ENCODE measurements at regions of chr17 and their contacts with region 1.

Region 1: GRCh38 chr17:42819944-42820535 is 4.0 kb downstream of the BECN1 start:
- DNase-seq: no peak
- H3K4me3 ChIP-seq: no peak overlapping the region
- H3K27ac ChIP-seq: no peak overlapping the region
- H3K4me1 ChIP-seq: peaks cover 21 to 36% (median 32%) of the 10 kb centered on the region in 4 donors
- H3K27me3 ChIP-seq: no peaks in the 10 kb centered on the region
- CTCF ChIP-seq: peak; percentile 39 to 73 (median 42)
- EP300 ChIP-seq: no peak
- POLR2A ChIP-seq: no peak

Region 2: DNA sequence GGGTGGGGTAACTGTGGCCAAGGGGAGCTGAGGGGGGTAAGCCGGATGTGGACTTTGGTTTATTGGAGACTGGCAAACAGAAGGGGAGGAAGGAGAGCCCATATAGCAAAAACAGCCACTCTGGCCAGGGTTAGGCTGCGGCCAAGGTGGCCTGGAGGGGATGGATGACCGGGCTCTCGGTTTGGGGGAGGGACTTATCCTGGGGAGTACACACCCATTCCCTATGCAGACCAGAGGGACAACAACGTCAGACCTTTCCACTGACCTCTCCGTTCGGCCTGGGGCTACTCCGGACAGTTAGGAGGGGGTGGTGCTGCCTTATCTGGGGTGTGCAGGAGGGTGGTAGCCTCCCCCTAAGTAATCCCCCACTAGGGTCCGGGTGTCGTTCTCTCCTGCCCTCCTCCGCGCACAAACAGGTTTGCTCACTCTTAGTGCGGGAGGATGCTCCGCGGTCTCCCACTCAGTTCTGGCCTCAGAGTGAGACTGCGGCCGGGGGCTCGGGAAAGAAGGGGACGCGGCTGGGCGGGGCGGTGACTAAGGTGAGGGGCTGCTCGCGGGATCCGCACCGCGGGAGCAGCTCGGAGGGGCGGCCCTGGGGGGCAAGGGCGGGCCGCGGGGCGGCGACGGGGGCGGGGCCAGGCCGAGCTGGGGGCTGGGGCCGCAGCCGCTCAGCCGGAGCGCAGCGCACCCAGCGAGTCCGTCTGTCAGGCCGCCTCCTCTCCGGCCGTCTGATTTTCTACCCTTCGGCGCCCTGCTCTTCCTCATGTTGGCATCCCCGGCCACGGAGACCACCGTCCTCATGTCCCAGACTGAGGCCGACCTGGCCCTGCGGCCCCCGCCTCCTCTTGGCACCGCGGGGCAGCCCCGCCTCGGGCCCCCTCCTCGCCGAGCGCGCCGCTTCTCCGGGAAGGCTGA is 39.8 kb before region 1 on chr17 and contains the start of gene WNK4:
- intact Hi-C with region 1: loop called (anchors 5 kb)
- DNase-seq: no peak
- H3K4me3 ChIP-seq: peak within 1 kb of the TSS; percentile 51 to 61 (median 58)
- H3K27ac ChIP-seq: peak within 1 kb of the TSS; percentile 57 to 70 (median 62)
- H3K4me1 ChIP-seq: peaks cover 20 to 53% (median 49%) of the 10 kb centered on the region in 4 donors
- H3K27me3 ChIP-seq: peaks cover 0 to 54% (median 12%) of the 10 kb centered on the region in 4 donors
- CTCF ChIP-seq: no peak
- EP300 ChIP-seq: no peak
- POLR2A ChIP-seq: no peak
- total RNA-seq, gene WNK4: 0.50 to 2.9 (median 2.1) TPM